Aorta (tissue), 5 donors: ENCODE measurements at regions of chr1 and their contacts with region 1.

Region 1: DNA sequence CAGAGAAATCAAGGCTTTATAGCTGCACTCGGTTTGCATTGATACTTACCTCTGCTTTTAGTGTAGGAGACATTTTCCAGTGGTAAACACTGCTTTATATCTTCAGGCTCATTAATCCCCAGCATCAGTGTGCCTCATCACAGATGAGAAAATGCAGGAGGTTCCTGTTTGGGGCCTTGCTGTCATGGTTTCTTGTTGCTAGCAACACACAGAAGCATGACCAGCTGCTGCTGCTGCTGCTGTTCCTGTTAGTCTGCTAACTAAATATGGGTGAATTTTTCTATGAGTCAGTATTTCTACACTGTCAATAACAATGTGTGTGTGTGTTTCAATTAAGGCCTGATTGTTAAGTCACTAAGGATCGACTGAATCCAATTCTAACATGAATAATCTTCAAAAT is 85.8 kb upstream of the RGS1 start:
- DNase-seq: peak; percentile 54 to 86
- ATAC-seq: peak; percentile 74
- H3K4me3 ChIP-seq: no peak overlapping the region
- H3K27ac ChIP-seq: no peak overlapping the region
- H3K4me1 ChIP-seq: peaks cover 0 to 1% of the 10 kb centered on the region in 2 donors
- H3K27me3 ChIP-seq: no peaks in the 10 kb centered on the region

Region 2: GRCh38 chr1:192521734-192522133 is 32.0 kb after region 1 on chr1:
- intact Hi-C with region 1: loop called in 1 of 2 experiments (anchors 5 kb)
- DNase-seq: no peak
- ATAC-seq: no peak
- H3K4me3 ChIP-seq: no peak overlapping the region
- H3K27ac ChIP-seq: peak overlapping the region in 1 of 2 donors; percentile 28
- H3K4me1 ChIP-seq: peaks cover 6 to 20% of the 10 kb centered on the region in 2 donors
- H3K27me3 ChIP-seq: no peaks in the 10 kb centered on the region

Region 3: GRCh38 chr1:192539297-192540092 is 49.7 kb after region 1 on chr1:
- intact Hi-C with region 1: loop called in 1 of 2 experiments (anchors 10 kb)
- DNase-seq: no peak
- ATAC-seq: peak; percentile 91
- H3K4me3 ChIP-seq: no peak overlapping the region
- H3K27ac ChIP-seq: peak overlapping the region; percentile 95 to 100
- H3K4me1 ChIP-seq: peaks cover 0 to 7% of the 10 kb centered on the region in 2 donors
- H3K27me3 ChIP-seq: no peaks in the 10 kb centered on the region

Region 4: GRCh38 chr1:192550922-192551534 is 61.3 kb after region 1 on chr1:
- intact Hi-C with region 1: loop called in 1 of 2 experiments (anchors 5 kb)
- DNase-seq: no peak
- ATAC-seq: no peak
- H3K4me3 ChIP-seq: no peak overlapping the region
- H3K27ac ChIP-seq: no peak overlapping the region
- H3K4me1 ChIP-seq: peaks cover under 1 to 5% of the 10 kb centered on the region in 2 donors
- H3K27me3 ChIP-seq: no peaks in the 10 kb centered on the region